Naive thymus-derived CD4-positive, alpha-beta T cell (primary cell): ENCODE measurements at regions of chr20 and their contacts with region 1.

Region 1: GRCh38 chr20:32585011-32585518 is at the start of gene NOL4L:
- DNase-seq: peak in 4 of 9 donors; percentile 34 to 59 (median 45)
- ATAC-seq: peak; percentile 30
- H3K4me3 ChIP-seq: peak within 1 kb of the TSS; percentile 78
- H3K4me3 Mint-ChIP-seq: peak within 1 kb of the TSS; percentile 89 to 97 (median 93)
- H3K27ac ChIP-seq: peak within 1 kb of the TSS; percentile 70
- H3K27ac Mint-ChIP-seq: peak within 1 kb of the TSS; percentile 78 to 97 (median 91)
- H3K4me1 ChIP-seq: peaks cover 9 to 37% of the 10 kb centered on the region in 2 donors
- H3K4me1 Mint-ChIP-seq: peaks cover 21 to 48% (median 38%) of the 10 kb centered on the region in 7 donors
- H3K27me3 ChIP-seq: no peaks in the 10 kb centered on the region
- H3K27me3 Mint-ChIP-seq: peaks cover 0 to 28% (median 0%) of the 10 kb centered on the region in 5 donors
- total RNA-seq, gene NOL4L: 29.4 to 81.9 (median 74.6) TPM

Region 2: GRCh38 chr20:32521780-32522525 is 63.1 kb before region 1 on chr20:
- CTCF ChIA-PET with region 1: interaction called, 10 read pairs
- POLR2A ChIA-PET with region 1: interaction called, 13 read pairs
- intact Hi-C with region 1: loop called in 1 of 2 experiments (anchors 1 kb)
- DNase-seq: peak; percentile 50 to 76 (median 63)
- ATAC-seq: peak; percentile 89
- H3K4me3 ChIP-seq: peak overlapping the region; percentile 27
- H3K4me3 Mint-ChIP-seq: peak overlapping the region in 9 of 10 donors; percentile 17 to 72 (median 53)
- H3K27ac ChIP-seq: peak overlapping the region; percentile 60
- H3K27ac Mint-ChIP-seq: peak overlapping the region; percentile 63 to 95 (median 90)
- H3K4me1 ChIP-seq: peaks cover 36 to 65% of the 10 kb centered on the region in 2 donors
- H3K4me1 Mint-ChIP-seq: peaks cover 39 to 77% (median 67%) of the 10 kb centered on the region in 7 donors
- H3K27me3 ChIP-seq: no peaks in the 10 kb centered on the region
- H3K27me3 Mint-ChIP-seq: no peaks in the 10 kb centered on the region

Region 3: DNA sequence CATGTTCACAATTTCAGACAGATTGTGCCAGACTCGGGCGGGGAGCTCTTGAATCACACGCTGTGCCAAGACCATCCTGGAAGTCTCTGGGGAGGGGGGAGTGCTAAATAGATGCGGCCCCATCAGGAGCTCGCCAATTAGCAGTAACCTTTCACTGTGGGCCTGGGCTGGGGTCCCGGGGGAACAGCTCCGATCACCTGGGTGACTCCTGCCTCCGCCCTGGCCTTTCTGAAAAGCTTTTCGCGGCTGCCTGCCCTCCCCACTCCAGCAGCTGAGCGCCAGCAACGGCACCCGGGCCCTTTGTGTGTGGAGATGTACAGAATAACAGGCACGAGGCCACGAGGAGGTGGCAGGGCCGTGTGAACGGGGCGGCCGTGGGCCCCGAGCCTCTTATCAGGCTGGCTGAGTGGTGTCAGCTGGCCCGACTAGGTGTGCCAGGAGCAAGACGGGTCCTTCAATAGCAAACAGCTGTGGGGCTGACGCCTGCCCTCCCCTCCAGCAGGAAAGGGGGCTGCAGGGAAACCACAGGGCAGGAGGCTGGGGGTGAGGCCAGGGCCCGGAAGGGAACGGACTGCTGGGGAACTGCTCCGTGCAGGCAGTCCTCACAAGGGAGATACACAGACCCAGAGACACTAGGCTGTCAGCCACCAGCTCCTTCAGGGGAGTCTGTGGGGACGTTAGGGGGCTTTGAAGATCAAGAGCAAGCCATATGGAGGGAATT is 56.7 kb before region 1 on chr20:
- CTCF ChIA-PET with region 1: interaction called, 3 read pairs
- POLR2A ChIA-PET with region 1: interaction called, 13 read pairs
- intact Hi-C with region 1: no loop called
- DNase-seq: peak in 5 of 9 donors; percentile 40 to 51 (median 45)
- ATAC-seq: peak; percentile 58
- H3K4me3 ChIP-seq: no peak overlapping the region
- H3K4me3 Mint-ChIP-seq: peak overlapping the region; percentile 51 to 87 (median 76)
- H3K27ac ChIP-seq: peak overlapping the region; percentile 73
- H3K27ac Mint-ChIP-seq: peak overlapping the region; percentile 55 to 97 (median 95)
- H3K4me1 ChIP-seq: peaks cover 21 to 79% of the 10 kb centered on the region in 2 donors
- H3K4me1 Mint-ChIP-seq: peaks cover 65 to 99% (median 89%) of the 10 kb centered on the region in 7 donors
- H3K27me3 ChIP-seq: no peaks in the 10 kb centered on the region
- H3K27me3 Mint-ChIP-seq: no peaks in the 10 kb centered on the region

Region 4: GRCh38 chr20:32562495-32562911 is 22.6 kb before region 1 on chr20:
- CTCF ChIA-PET with region 1: interaction called, 3 read pairs
- POLR2A ChIA-PET with region 1: interaction called, 4 read pairs
- intact Hi-C with region 1: loop called in 1 of 2 experiments (anchors 2 kb)
- DNase-seq: no peak
- ATAC-seq: no peak
- H3K4me3 ChIP-seq: no peak overlapping the region
- H3K4me3 Mint-ChIP-seq: peak overlapping the region in 9 of 10 donors; percentile 55 to 75 (median 67)
- H3K27ac ChIP-seq: peak overlapping the region; percentile 43
- H3K27ac Mint-ChIP-seq: peak overlapping the region in 8 of 9 donors; percentile 71 to 93 (median 84)
- H3K4me1 ChIP-seq: peaks cover 7 to 35% of the 10 kb centered on the region in 2 donors
- H3K4me1 Mint-ChIP-seq: peaks cover 12 to 64% (median 52%) of the 10 kb centered on the region in 7 donors
- H3K27me3 ChIP-seq: no peaks in the 10 kb centered on the region
- H3K27me3 Mint-ChIP-seq: no peaks in the 10 kb centered on the region

Region 5: DNA sequence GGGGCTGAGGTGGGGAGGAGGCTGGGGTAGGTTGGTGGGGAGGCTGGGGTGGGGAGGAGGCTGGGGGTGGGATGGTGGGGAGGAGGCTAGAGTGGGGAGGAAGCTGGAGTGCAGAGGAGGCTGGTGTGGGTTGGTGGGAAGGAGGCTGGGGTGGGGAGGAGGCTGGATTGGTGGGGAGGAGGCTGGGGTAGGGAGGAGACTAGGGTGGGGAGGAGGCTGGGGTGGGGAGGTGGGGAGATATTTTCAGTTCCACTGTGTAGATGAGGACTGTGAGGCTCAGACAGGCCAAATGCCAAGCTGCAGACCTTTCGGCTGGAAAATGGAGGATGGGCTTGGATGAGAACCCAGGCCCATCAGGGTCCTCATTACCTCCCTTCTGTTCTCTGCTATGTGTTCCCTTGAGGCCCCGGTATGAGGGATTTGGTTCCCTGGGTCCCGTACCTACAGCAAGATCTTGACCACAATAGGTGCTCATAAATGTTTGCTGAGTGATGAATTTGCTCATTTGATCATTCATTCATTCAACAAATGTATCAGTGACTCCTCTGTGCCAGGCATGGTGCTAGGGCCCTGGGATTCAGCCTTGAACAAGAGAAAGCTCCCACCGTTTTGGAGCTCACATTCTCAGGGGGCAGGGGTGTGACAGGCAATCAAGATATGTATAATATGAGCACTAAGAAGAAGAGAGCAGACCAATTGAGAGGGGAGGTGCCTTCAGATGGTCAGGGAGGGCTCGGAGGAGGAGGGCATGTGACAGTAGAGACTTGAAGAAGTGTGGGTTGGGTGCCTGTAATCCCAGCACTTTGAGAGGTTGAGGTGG is 36.2 kb after region 1 on chr20:
- CTCF ChIA-PET with region 1: no interaction called
- POLR2A ChIA-PET with region 1: no interaction called
- intact Hi-C with region 1: loop called in 1 of 2 experiments (anchors 5 kb)
- DNase-seq: peak in 1 of 9 donors; percentile 22
- ATAC-seq: no peak
- H3K4me3 ChIP-seq: no peak overlapping the region
- H3K4me3 Mint-ChIP-seq: no peak overlapping the region
- H3K27ac ChIP-seq: no peak overlapping the region
- H3K27ac Mint-ChIP-seq: peak overlapping the region in 5 of 9 donors; percentile 1 to 75 (median 18)
- H3K4me1 ChIP-seq: peaks cover 0 to 3% of the 10 kb centered on the region in 2 donors
- H3K4me1 Mint-ChIP-seq: peaks cover 4 to 14% (median 9%) of the 10 kb centered on the region in 7 donors
- H3K27me3 ChIP-seq: no peaks in the 10 kb centered on the region
- H3K27me3 Mint-ChIP-seq: peaks cover 0 to 2% (median 0%) of the 10 kb centered on the region in 5 donors

Region 6: DNA sequence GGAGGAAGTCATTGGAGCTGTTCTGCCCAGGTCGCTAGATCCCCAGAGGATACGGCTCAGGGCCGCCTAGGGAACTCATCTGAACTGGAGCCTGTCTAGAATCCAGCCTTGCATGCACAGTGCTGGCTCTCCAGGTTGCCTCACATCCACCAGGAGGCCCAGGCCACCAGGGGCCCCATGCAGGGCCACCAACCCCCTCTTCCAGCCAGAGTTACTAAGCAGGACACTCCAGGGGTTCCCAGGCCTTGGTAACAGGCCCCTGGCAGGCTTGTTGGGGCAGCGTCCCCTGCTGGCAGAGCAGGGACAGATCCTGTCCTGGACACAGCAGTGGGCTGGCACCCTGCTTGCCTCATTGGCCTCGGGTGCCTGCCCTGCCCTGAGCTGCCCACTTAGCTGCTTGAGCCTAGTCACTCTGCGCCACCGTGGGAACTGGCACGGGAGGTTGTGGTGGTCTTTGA is 309.0 kb after region 1 on chr20:
- CTCF ChIA-PET with region 1: no interaction called
- POLR2A ChIA-PET with region 1: no interaction called
- intact Hi-C with region 1: no loop called
- DNase-seq: no peak
- ATAC-seq: no peak
- H3K4me3 ChIP-seq: no peak overlapping the region
- H3K4me3 Mint-ChIP-seq: no peak overlapping the region
- H3K27ac ChIP-seq: no peak overlapping the region
- H3K27ac Mint-ChIP-seq: no peak overlapping the region
- H3K4me1 ChIP-seq: no peaks in the 10 kb centered on the region
- H3K4me1 Mint-ChIP-seq: peaks cover 0 to 5% (median 0%) of the 10 kb centered on the region in 7 donors
- H3K27me3 ChIP-seq: no peaks in the 10 kb centered on the region
- H3K27me3 Mint-ChIP-seq: no peaks in the 10 kb centered on the region